ENCODE measurements at regions of chr2 and their contacts with region 1.

Region 1: DNA sequence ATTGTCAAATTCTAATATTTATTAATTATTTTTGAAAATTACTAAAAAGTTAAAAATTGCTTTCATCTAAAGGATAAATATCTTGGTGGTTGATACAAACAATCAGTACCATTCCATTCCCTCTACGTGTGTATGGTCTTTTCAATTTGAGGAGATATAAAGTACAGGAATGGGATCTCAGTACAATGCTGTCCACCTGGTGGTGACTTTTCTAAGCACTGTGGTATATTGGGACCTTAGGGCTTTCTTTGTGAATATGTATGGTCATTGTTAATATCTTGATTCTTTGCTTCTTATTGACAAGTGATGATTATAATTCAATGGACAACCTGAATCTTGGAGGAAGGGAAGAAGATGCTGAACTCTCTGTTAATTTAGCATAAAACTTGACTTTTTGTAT is 83.1 kb downstream of the NBEAL1 start:
- DNase-seq: peak; percentile 24
- H3K4me3 Mint-ChIP-seq: no peak overlapping the region
- H3K27ac Mint-ChIP-seq: no peak overlapping the region
- H3K4me1 Mint-ChIP-seq: no peaks in the 10 kb centered on the region
- H3K27me3 Mint-ChIP-seq: no peaks in the 10 kb centered on the region
- CTCF ChIP-seq: peak; percentile 23

Region 2: GRCh38 chr2:202911512-202912341 is 186.0 kb before region 1 on chr2 and contains the starts of genes CARF and WDR12:
- CTCF ChIA-PET with region 1: no interaction called
- POLR2A ChIA-PET with region 1: no interaction called
- intact Hi-C with region 1: loop called (anchors 5 kb)
- DNase-seq: peak; percentile 95
- H3K4me3 Mint-ChIP-seq: peak within 1 kb of the TSS; percentile 96
- H3K27ac Mint-ChIP-seq: peak within 1 kb of the TSS; percentile 87
- H3K4me1 Mint-ChIP-seq: peaks cover 18% of the 10 kb centered on the region
- H3K27me3 Mint-ChIP-seq: no peaks in the 10 kb centered on the region
- CTCF ChIP-seq: no peak
- total RNA-seq, gene CARF: 6.8 and 8.2 TPM in 2 replicates
- total RNA-seq, gene WDR12: 141 and 146 TPM in 2 replicates

Region 3: DNA sequence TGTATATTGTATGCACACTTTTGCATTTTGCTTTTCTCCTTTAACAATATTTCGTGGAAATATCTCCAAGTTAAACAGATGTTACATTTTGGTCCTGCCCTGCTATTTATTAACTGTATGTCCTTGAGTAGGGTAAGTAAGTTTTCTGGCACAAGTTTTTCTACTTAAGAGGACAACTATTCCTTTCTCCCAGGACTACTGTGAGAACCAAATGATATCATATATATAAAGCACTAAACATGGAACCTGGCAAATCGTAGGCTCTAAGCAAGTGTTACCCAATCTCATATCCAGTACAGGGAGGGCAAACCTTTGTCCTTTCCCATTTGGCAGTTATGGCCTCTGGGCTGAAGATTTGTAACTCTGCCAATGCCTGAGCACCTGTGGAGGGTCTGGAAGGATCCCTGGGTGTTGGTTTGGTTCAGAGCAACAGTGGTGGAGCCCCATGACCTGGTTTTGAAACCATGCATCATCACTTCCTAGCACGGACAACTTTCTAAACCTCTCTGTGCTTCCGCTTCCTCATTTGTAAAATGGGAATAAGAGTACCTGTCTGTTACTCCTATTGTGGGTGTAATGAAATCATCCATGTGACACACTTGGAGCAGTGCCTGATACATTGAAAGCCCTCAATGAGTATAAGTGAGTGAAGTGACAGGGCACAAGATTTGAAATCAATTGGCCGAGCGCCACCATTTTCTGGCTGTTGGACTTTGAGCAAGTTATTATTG is 810.5 kb after region 1 on chr2:
- CTCF ChIA-PET with region 1: no interaction called
- POLR2A ChIA-PET with region 1: no interaction called
- intact Hi-C with region 1: no loop called
- DNase-seq: no peak
- H3K4me3 Mint-ChIP-seq: no peak overlapping the region
- H3K27ac Mint-ChIP-seq: no peak overlapping the region
- H3K4me1 Mint-ChIP-seq: no peaks in the 10 kb centered on the region
- H3K27me3 Mint-ChIP-seq: no peaks in the 10 kb centered on the region
- CTCF ChIP-seq: no peak